Heart left ventricle (tissue), 16 donors: ENCODE measurements at regions of chr6 and their contacts with region 1.

Region 1: GRCh38 chr6:168157272-168158007 is 78.4 kb upstream of the FRMD1 start:
- DNase-seq: peak in 1 of 5 donors; percentile 12
- ATAC-seq: peak in 1 of 4 donors; percentile 71
- H3K4me3 ChIP-seq: peak overlapping the region in 1 of 12 donors; percentile 32
- H3K27ac ChIP-seq: peak overlapping the region in 2 of 12 donors; percentile 29 to 69
- H3K4me1 ChIP-seq: peaks cover 0 to 7% (median 0%) of the 10 kb centered on the region in 12 donors
- H3K27me3 ChIP-seq: peaks cover 0 to 38% (median 4%) of the 10 kb centered on the region in 9 donors
- CTCF ChIP-seq: no peak
- POLR2A ChIP-seq: no peak

Region 2: GRCh38 chr6:167766986-167767714 is 390.3 kb before region 1 on chr6:
- intact Hi-C with region 1: no loop called
- DNase-seq: peak in 1 of 5 donors; percentile 50
- ATAC-seq: peak; percentile 16 to 73 (median 58)
- H3K4me3 ChIP-seq: no peak overlapping the region
- H3K27ac ChIP-seq: no peak overlapping the region
- H3K4me1 ChIP-seq: peaks cover 0 to 1% (median 0%) of the 10 kb centered on the region in 12 donors
- H3K27me3 ChIP-seq: peaks cover 0 to 3% (median 0%) of the 10 kb centered on the region in 9 donors
- CTCF ChIP-seq: peak in 3 of 12 donors; percentile 10 to 29 (median 24)
- POLR2A ChIP-seq: no peak

Region 3: DNA sequence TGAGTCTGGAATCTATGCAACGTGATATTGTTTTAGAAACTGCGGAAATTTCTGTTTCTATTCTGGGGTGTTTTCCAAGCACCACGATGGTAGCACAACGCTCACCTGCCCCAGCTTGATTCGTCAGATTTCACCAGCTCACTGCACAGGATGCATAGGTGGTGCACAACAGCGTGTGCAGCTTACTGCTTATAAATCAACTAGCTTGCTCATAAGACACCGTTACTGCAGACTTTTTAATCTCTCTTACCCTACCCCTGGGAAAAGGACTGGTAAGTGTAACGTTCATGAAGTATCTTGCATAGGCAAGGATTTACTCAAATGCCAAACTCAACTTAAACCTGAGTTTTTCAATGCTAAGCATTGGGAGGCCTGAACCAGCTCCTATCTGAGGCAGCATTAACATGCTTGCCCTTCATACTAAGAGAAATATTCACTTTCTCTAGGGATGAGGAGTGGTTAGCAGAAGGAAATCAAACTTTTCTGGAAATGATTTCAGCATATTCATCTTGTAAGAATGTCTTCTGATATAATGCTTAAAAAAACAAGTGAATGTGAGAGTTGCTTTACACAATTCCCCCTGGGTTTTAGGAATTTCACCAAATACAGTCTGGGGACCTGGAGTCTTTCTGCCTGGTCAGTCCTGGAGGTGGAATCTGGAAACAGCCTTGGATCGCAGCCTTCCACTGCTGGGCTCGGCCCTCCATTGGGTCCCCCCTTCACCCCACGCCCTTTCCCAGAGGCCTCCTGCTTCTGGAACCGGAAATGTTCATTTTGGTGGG is 61.5 kb after region 1 on chr6:
- intact Hi-C with region 1: no loop called
- DNase-seq: peak in 4 of 5 donors; percentile 46 to 82 (median 58)
- ATAC-seq: peak; percentile 40 to 88 (median 85)
- H3K4me3 ChIP-seq: no peak overlapping the region
- H3K27ac ChIP-seq: peak overlapping the region in 7 of 12 donors; percentile 24 to 86 (median 61)
- H3K4me1 ChIP-seq: peaks cover 0 to 22% (median 1%) of the 10 kb centered on the region in 12 donors
- H3K27me3 ChIP-seq: peaks cover 0 to 23% (median 0%) of the 10 kb centered on the region in 9 donors
- CTCF ChIP-seq: no peak
- POLR2A ChIP-seq: no peak

Region 4: GRCh38 chr6:168342641-168343040 is 185.2 kb after region 1 on chr6:
- intact Hi-C with region 1: loop called in 1 of 10 experiments (anchors 10 kb)
- DNase-seq: no peak
- ATAC-seq: no peak
- H3K4me3 ChIP-seq: no peak overlapping the region
- H3K27ac ChIP-seq: no peak overlapping the region
- H3K4me1 ChIP-seq: no peaks in the 10 kb centered on the region
- H3K27me3 ChIP-seq: peaks cover 0 to 22% (median 7%) of the 10 kb centered on the region in 9 donors
- CTCF ChIP-seq: no peak
- POLR2A ChIP-seq: no peak